PC-3 (cell line): ENCODE measurements at regions of chr2 and their contacts with region 1.

Region 1: GRCh38 chr2:207710814-207711740 is at the start of gene CCNYL1:
- DNase-seq: peak; percentile 99
- ATAC-seq: peak; percentile 94
- H3K4me3 ChIP-seq: peak within 1 kb of the TSS; percentile 79
- H3K27ac ChIP-seq: peak within 1 kb of the TSS; percentile 91
- H3K4me1 ChIP-seq: peaks cover 36% of the 10 kb centered on the region
- H3K27me3 ChIP-seq: no peaks in the 10 kb centered on the region
- CTCF ChIP-seq: no peak
- total RNA-seq, gene CCNYL1: 14.7 and 19.2 TPM in 2 replicates

Region 2: DNA sequence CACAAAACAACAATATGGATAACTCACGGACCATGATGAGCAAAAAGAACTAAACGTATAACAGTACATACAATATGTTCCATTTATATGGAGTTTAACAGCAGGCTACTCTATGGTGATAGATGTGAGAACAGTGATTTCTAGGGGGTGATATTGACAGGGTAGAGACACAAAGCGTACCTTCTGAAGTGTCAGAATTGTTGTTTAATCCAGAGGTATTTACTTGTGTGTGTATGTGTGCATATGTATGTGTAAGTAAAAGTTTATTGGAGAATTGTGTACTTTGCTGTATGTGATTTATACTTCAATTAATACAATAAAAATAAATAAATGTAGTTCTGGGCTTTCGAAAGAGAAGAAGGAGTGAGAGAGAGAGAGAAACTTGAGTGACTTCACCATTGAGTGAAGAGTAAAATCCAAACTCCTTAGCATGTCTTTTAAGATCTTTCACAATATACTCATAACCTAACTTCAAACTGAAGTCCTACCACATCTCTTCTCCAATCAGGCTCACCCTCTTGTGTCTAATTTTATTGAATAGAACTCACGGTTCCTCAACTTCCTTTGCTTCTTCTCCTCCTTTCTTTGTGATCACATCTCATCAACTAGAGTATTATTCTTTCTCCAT is 419.3 kb before region 1 on chr2:
- CTCF ChIA-PET with region 1: no interaction called
- POLR2A ChIA-PET with region 1: no interaction called
- intact Hi-C with region 1: no loop called
- DNase-seq: no peak
- ATAC-seq: no peak
- H3K4me3 ChIP-seq: no peak overlapping the region
- H3K27ac ChIP-seq: no peak overlapping the region
- H3K4me1 ChIP-seq: peaks cover 16% of the 10 kb centered on the region
- H3K27me3 ChIP-seq: no peaks in the 10 kb centered on the region
- CTCF ChIP-seq: no peak

Region 3: DNA sequence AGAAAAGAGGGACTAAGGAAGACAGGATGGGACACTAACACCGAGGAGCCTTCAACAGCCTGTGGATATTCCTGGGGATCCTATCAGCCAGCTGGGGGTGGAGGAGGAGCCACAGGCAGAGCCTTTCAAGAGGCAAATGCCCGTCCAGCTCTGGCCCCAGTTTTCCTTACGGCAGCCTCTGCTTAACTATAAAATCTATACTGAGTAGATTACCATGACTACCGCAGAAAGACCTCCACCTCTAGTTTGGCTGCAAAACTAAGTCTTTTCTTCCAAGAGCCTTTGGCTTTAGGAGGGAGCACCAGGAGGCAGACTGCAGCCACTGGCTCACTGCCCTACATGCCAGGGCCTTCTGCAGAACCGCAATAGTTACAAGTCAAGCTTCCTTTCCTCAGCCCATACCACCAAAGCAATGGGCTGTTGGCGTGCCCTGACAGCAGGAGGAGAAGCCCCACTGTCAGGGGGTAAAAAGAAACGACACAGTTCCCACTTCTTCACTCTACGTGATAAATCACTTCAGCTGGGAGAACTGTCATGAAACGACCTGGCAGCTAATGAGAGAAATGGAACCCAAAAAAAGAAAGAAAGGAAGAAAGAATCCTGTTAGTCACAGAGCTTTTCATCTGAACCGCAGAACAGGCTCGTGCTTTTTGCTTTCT is 206.4 kb before region 1 on chr2:
- CTCF ChIA-PET with region 1: no interaction called
- POLR2A ChIA-PET with region 1: interaction called, 26 read pairs
- intact Hi-C with region 1: no loop called
- DNase-seq: no peak
- ATAC-seq: no peak
- H3K4me3 ChIP-seq: no peak overlapping the region
- H3K27ac ChIP-seq: peak overlapping the region; percentile 90
- H3K4me1 ChIP-seq: peaks cover 34% of the 10 kb centered on the region
- H3K27me3 ChIP-seq: no peaks in the 10 kb centered on the region
- CTCF ChIP-seq: no peak

Region 4: GRCh38 chr2:207619764-207620203 is 91.3 kb before region 1 on chr2:
- CTCF ChIA-PET with region 1: interaction called, 18 read pairs
- POLR2A ChIA-PET with region 1: interaction called, 10 read pairs
- intact Hi-C with region 1: loop called (anchors 1 kb)
- DNase-seq: no peak
- ATAC-seq: no peak
- H3K4me3 ChIP-seq: no peak overlapping the region
- H3K27ac ChIP-seq: no peak overlapping the region
- H3K4me1 ChIP-seq: peaks cover 37% of the 10 kb centered on the region
- H3K27me3 ChIP-seq: no peaks in the 10 kb centered on the region
- CTCF ChIP-seq: no peak

Region 5: DNA sequence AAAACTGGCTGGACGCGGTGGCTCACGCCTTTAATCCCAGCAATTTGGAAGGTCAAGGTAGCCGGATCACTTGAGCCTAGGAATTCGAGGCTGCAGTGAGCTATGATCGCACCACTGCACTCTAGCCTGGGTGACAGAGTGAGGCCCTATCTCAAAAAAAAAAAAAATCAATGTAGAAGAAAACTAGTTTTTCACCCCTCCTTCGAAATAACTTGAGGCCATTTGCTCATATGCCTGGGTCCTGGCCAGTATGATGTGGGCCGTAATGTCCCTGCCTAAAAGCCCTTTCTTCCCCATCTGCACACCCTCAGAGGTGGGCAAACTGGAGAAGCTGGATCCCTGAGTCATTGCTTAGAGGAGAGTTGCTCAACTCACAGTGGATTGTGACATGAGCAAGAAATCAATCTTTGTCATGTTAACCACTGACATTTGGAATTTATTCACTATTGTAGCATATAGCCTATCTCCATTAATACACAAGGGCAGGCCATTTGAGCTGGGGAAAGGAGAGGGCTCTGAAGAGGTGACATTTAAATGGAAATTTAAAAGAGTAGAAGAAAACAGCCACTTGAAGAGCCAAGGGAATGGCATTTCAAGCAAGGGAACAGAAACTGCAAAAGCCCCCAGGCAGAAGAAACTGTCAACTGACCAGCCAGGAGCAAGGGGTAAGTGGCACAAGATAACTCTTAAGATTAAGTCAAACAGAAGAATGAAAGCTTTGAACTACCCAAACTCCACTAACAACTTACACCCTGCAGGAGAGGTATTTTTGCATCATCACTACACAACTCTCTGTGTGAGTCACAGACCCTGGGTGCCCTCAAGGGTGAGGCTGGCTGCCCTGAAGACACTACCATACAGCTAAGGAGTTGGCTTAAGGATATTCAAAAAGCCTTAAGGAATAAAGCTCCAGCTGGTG is 78.2 kb before region 1 on chr2:
- CTCF ChIA-PET with region 1: no interaction called
- POLR2A ChIA-PET with region 1: interaction called, 7 read pairs
- intact Hi-C with region 1: loop called (anchors 2 kb)
- DNase-seq: peak; percentile 97
- ATAC-seq: peak; percentile 89
- H3K4me3 ChIP-seq: peak overlapping the region; percentile 23; the same call in 1 of the 2 replicates
- H3K27ac ChIP-seq: peak overlapping the region; percentile 97
- H3K4me1 ChIP-seq: peaks cover 34% of the 10 kb centered on the region
- H3K27me3 ChIP-seq: no peaks in the 10 kb centered on the region
- CTCF ChIP-seq: no peak

Region 6: DNA sequence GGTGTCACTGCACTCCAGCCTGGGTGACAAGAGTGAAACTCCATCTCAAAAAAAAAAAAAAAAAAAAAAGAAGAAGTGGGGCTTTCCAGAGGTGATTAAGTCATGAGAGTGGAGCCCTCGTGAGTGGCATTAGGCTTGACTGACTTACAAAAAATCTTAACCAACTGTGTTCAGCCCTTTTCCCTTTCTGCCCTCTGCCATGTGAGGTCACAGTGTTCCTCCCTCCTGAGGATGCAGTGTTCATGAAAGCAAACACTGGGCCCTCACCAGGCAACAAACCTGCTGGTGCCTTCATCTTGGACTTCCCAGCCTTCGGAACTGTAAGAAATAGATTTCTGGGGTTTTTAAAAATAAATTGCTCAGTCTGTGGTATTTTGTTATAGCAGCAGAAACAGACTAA is 48.9 kb before region 1 on chr2:
- CTCF ChIA-PET with region 1: interaction called, 3 read pairs
- POLR2A ChIA-PET with region 1: interaction called, 29 read pairs
- intact Hi-C with region 1: loop called (anchors 5 kb)
- DNase-seq: no peak
- ATAC-seq: no peak
- H3K4me3 ChIP-seq: no peak overlapping the region
- H3K27ac ChIP-seq: no peak overlapping the region
- H3K4me1 ChIP-seq: peaks cover 6% of the 10 kb centered on the region
- H3K27me3 ChIP-seq: no peaks in the 10 kb centered on the region
- CTCF ChIP-seq: no peak

Region 7: GRCh38 chr2:207683879-207684627 is 27.0 kb before region 1 on chr2:
- CTCF ChIA-PET with region 1: interaction called, 3 read pairs
- POLR2A ChIA-PET with region 1: interaction called, 11 read pairs
- intact Hi-C with region 1: loop called (anchors 2 kb)
- DNase-seq: peak; percentile 96
- ATAC-seq: peak; percentile 87
- H3K4me3 ChIP-seq: peak overlapping the region; percentile 9; the same call in 1 of the 2 replicates
- H3K27ac ChIP-seq: peak overlapping the region; percentile 94
- H3K4me1 ChIP-seq: peaks cover 23% of the 10 kb centered on the region
- H3K27me3 ChIP-seq: no peaks in the 10 kb centered on the region
- CTCF ChIP-seq: no peak

Region 8: GRCh38 chr2:207734264-207734635 is 23.2 kb after region 1 on chr2:
- CTCF ChIA-PET with region 1: interaction called, 3 read pairs
- POLR2A ChIA-PET with region 1: no interaction called
- intact Hi-C with region 1: loop called (anchors 1 kb)
- DNase-seq: peak; percentile 70
- ATAC-seq: peak; percentile 95
- H3K4me3 ChIP-seq: no peak overlapping the region
- H3K27ac ChIP-seq: no peak overlapping the region
- H3K4me1 ChIP-seq: no peaks in the 10 kb centered on the region
- H3K27me3 ChIP-seq: no peaks in the 10 kb centered on the region
- CTCF ChIP-seq: peak; percentile 76